Adrenal gland (tissue), 19 donors: ENCODE measurements at regions of chr9 and their contacts with region 1.

Region 1: DNA sequence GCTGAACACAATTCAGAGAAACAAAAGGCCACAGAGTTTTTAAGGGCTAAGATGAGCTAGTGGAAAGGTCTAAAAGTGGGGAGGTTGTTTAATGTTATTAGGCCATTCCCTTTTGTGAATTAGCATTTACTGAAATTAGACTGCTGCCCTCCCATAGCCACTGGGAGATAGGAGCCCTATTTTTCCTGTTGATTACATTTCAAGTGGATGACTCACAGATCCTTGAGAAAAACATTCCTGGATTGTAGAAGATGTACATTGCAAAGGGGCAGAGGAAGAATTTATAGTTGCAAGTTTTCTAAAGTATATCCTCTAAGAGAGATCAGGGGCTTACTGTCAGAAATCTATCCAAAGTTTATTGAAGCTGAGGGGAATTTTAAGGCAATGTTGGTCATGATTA is 367.1 kb upstream of the IZUMO3 start:
- DNase-seq: no peak
- H3K4me3 ChIP-seq: no peak overlapping the region
- H3K27ac ChIP-seq: no peak overlapping the region
- H3K4me1 ChIP-seq: no peaks in the 10 kb centered on the region
- H3K27me3 ChIP-seq: no peaks in the 10 kb centered on the region
- CTCF ChIP-seq: no peak
- POLR2A ChIP-seq: no peak

Region 2: GRCh38 chr9:24561957-24562356 is 350.8 kb before region 1 on chr9:
- intact Hi-C with region 1: loop called in 1 of 2 experiments (anchors 10 kb)
- DNase-seq: no peak
- H3K4me3 ChIP-seq: no peak overlapping the region
- H3K27ac ChIP-seq: no peak overlapping the region
- H3K4me1 ChIP-seq: no peaks in the 10 kb centered on the region
- H3K27me3 ChIP-seq: no peaks in the 10 kb centered on the region
- CTCF ChIP-seq: no peak
- POLR2A ChIP-seq: no peak